ENCODE measurements at regions of chr11 and their contacts with region 1.

Region 1: GRCh38 chr11:3767536-3767935 is 29.8 kb downstream of the NUP98 start:
- DNase-seq: no peak
- ATAC-seq: no peak
- H3K4me3 ChIP-seq: no peak overlapping the region
- H3K4me3 Mint-ChIP-seq: no peak overlapping the region
- H3K27ac ChIP-seq: no peak overlapping the region
- H3K27ac Mint-ChIP-seq: no peak overlapping the region
- H3K4me1 ChIP-seq: no peaks in the 10 kb centered on the region
- H3K4me1 Mint-ChIP-seq: no peaks in the 10 kb centered on the region
- H3K27me3 ChIP-seq: no peaks in the 10 kb centered on the region
- H3K27me3 Mint-ChIP-seq: no peaks in the 10 kb centered on the region
- CTCF ChIP-seq: no peak

Region 2: GRCh38 chr11:3723014-3723708 is 44.4 kb before region 1 on chr11:
- CTCF ChIA-PET with region 1: no interaction called
- POLR2A ChIA-PET with region 1: no interaction called
- intact Hi-C with region 1: loop called (anchors 5 kb)
- DNase-seq: no peak
- ATAC-seq: no peak
- H3K4me3 ChIP-seq: no peak overlapping the region
- H3K4me3 Mint-ChIP-seq: no peak overlapping the region
- H3K27ac ChIP-seq: no peak overlapping the region
- H3K27ac Mint-ChIP-seq: no peak overlapping the region
- H3K4me1 ChIP-seq: no peaks in the 10 kb centered on the region
- H3K4me1 Mint-ChIP-seq: no peaks in the 10 kb centered on the region
- H3K27me3 ChIP-seq: no peaks in the 10 kb centered on the region
- H3K27me3 Mint-ChIP-seq: no peaks in the 10 kb centered on the region
- CTCF ChIP-seq: no peak

Region 3: GRCh38 chr11:3807909-3808860 is 40.6 kb after region 1 on chr11 and contains the start of gene PGAP2:
- CTCF ChIA-PET with region 1: interaction called, 4 read pairs
- POLR2A ChIA-PET with region 1: no interaction called
- intact Hi-C with region 1: loop called (anchors 5 kb)
- DNase-seq: peak; percentile 71
- ATAC-seq: peak; percentile 85
- H3K4me3 ChIP-seq: peak within 1 kb of the TSS; percentile 91 to 99 (median 96)
- H3K4me3 Mint-ChIP-seq: peak within 1 kb of the TSS; percentile 98
- H3K27ac ChIP-seq: peak within 1 kb of the TSS; percentile 59 to 60
- H3K27ac Mint-ChIP-seq: peak within 1 kb of the TSS; percentile 92
- H3K4me1 ChIP-seq: peaks cover 6 to 17% of the 10 kb centered on the region in 2 donors
- H3K4me1 Mint-ChIP-seq: peaks cover 11% of the 10 kb centered on the region
- H3K27me3 ChIP-seq: no peaks in the 10 kb centered on the region
- H3K27me3 Mint-ChIP-seq: no peaks in the 10 kb centered on the region
- CTCF ChIP-seq: peak; percentile 61
- total RNA-seq, gene PGAP2: 20.5 and 20.8 TPM in 2 replicates

Region 4: DNA sequence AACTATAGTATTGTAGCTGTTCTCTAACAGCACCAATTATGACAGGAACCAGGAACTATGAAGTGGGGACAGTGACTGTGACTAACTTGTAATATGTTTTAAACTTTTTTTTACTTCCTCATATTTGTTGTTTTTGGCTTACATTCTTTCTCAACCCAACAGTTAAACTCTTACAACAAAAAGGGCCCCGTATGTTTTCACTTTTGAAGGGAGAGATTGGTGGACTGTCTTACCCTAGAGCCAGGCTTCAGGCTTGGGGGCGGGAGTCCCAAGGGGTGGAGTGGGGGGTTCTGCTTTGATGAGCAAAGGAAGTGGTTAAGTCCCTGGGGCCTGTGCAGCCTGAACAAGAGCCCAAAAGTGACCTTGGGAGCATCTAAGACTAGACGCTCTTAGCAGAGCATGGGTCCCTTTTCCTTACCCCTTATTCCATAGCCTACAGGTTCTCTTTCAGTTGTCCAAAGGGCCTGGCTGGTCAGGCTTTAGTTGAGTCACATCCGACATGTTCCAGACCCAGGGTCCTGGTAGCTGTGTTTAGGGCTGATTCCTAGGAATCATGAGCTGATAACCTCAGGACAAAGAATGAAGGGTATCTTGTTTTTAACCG is 126.7 kb after region 1 on chr11:
- CTCF ChIA-PET with region 1: no interaction called
- POLR2A ChIA-PET with region 1: no interaction called
- intact Hi-C with region 1: no loop called
- DNase-seq: peak; percentile 95
- ATAC-seq: peak; percentile 98
- H3K4me3 ChIP-seq: peak overlapping the region in 4 of 5 experiments; percentile 23 to 53 (median 32)
- H3K4me3 Mint-ChIP-seq: peak overlapping the region; percentile 78
- H3K27ac ChIP-seq: peak overlapping the region; percentile 71 to 82
- H3K27ac Mint-ChIP-seq: peak overlapping the region; percentile 89
- H3K4me1 ChIP-seq: peaks cover 67 to 72% of the 10 kb centered on the region in 2 donors
- H3K4me1 Mint-ChIP-seq: peaks cover 70% of the 10 kb centered on the region
- H3K27me3 ChIP-seq: no peaks in the 10 kb centered on the region
- H3K27me3 Mint-ChIP-seq: no peaks in the 10 kb centered on the region
- CTCF ChIP-seq: no peak

Region 5: GRCh38 chr11:3905080-3905953 is 137.8 kb after region 1 on chr11:
- CTCF ChIA-PET with region 1: no interaction called
- POLR2A ChIA-PET with region 1: no interaction called
- intact Hi-C with region 1: no loop called
- DNase-seq: no peak
- ATAC-seq: peak; percentile 63
- H3K4me3 ChIP-seq: no peak overlapping the region
- H3K4me3 Mint-ChIP-seq: peak overlapping the region; percentile 49
- H3K27ac ChIP-seq: peak overlapping the region in 1 of 2 donors; percentile 46
- H3K27ac Mint-ChIP-seq: peak overlapping the region; percentile 37
- H3K4me1 ChIP-seq: peaks cover 61 to 66% of the 10 kb centered on the region in 2 donors
- H3K4me1 Mint-ChIP-seq: peaks cover 76% of the 10 kb centered on the region
- H3K27me3 ChIP-seq: no peaks in the 10 kb centered on the region
- H3K27me3 Mint-ChIP-seq: no peaks in the 10 kb centered on the region
- CTCF ChIP-seq: no peak

Region 6: DNA sequence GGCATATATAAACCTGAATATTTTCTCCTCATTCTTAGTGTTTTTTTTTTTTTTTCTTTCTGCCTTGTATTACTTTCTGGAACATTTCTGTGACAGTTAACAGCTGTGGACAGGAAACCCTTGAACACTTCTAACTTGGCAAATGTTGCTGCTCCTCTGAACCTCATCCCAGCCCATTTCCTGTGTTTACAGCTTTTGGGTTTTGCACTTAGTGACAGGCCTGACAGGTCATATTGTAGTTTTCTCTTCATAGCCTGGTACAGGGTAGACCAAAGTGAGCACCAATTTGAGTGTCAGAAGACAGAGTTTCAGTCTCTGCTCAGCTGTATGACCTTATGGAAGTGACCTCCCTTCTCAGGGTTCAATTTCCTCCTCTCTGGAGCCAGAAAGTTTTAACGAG is 179.5 kb after region 1 on chr11:
- CTCF ChIA-PET with region 1: no interaction called
- POLR2A ChIA-PET with region 1: no interaction called
- intact Hi-C with region 1: no loop called
- DNase-seq: peak; percentile 52
- ATAC-seq: peak; percentile 69
- H3K4me3 ChIP-seq: peak overlapping the region in 3 of 5 experiments; percentile 21 to 35 (median 28)
- H3K4me3 Mint-ChIP-seq: peak overlapping the region; percentile 55
- H3K27ac ChIP-seq: peak overlapping the region; percentile 59 to 84
- H3K27ac Mint-ChIP-seq: peak overlapping the region; percentile 87
- H3K4me1 ChIP-seq: peaks cover 80 to 83% of the 10 kb centered on the region in 2 donors
- H3K4me1 Mint-ChIP-seq: peaks cover 92% of the 10 kb centered on the region
- H3K27me3 ChIP-seq: no peaks in the 10 kb centered on the region
- H3K27me3 Mint-ChIP-seq: no peaks in the 10 kb centered on the region
- CTCF ChIP-seq: no peak